PC-9 (cell line): ENCODE measurements at regions of chr9 and their contacts with region 1.

Region 1: DNA sequence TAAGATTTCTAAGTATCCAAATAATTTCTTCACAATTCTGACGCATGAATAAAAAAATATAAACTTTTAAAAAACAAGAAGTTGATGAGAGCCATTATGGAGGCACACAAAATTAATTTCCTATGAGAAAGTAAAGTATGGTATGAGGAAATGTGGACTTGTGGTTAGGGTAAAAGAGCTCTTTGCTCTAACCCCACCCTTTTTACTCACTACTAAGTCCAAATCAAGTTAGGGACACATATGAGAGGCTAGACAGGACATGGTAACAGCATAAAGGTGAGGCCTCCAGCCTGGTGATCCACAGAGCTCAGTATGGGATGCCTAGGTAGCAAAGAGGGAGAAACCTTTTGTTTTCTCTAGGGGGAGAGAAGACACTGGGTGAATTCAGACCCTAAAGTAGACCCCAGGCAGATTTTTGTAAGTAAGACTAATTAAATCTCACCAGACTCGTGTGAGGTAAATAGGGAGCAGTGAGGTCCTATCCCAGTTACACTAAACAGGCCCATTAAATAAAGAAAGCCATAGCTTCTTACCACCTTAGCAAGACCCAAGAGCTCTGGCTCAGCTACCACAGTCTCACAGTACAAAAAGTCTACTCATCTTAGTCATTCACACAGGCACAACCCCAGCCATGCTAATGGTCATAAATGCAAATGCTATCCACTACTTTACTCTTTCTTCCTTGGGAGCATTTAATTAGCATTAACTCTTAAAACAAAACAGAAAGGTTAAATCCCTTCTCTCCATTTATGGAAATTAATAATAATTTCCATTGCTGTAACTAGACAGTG is 42.6 kb downstream of the MLLT3 start:
- DNase-seq: peak in 1 of 2 experiments; percentile 63
- H3K4me3 ChIP-seq: no peak overlapping the region
- H3K27ac ChIP-seq: no peak overlapping the region
- H3K4me1 ChIP-seq: peaks cover 25% of the 10 kb centered on the region
- H3K27me3 ChIP-seq: no peaks in the 10 kb centered on the region
- CTCF ChIP-seq: no peak

Region 2: GRCh38 chr9:20512106-20512505 is 67.6 kb before region 1 on chr9:
- CTCF ChIA-PET with region 1: no interaction called
- POLR2A ChIA-PET with region 1: no interaction called
- intact Hi-C with region 1: loop called (anchors 2 kb)
- DNase-seq: peak; percentile 49 to 80
- H3K4me3 ChIP-seq: no peak overlapping the region
- H3K27ac ChIP-seq: peak overlapping the region; percentile 77
- H3K4me1 ChIP-seq: peaks cover 20% of the 10 kb centered on the region
- H3K27me3 ChIP-seq: no peaks in the 10 kb centered on the region
- CTCF ChIP-seq: no peak

Region 3: GRCh38 chr9:20552874-20553575 is 26.7 kb before region 1 on chr9:
- CTCF ChIA-PET with region 1: no interaction called
- POLR2A ChIA-PET with region 1: no interaction called
- intact Hi-C with region 1: loop called (anchors 2 kb)
- DNase-seq: no peak
- H3K4me3 ChIP-seq: no peak overlapping the region
- H3K27ac ChIP-seq: peak overlapping the region; percentile 99
- H3K4me1 ChIP-seq: peaks cover 50% of the 10 kb centered on the region
- H3K27me3 ChIP-seq: no peaks in the 10 kb centered on the region
- CTCF ChIP-seq: 0 out of 2 replicates have a peak, but pooled peaks have one; percentile 30